HCT116 (cell line): ENCODE measurements at regions of chr20 and their contacts with region 1.

Region 1: DNA sequence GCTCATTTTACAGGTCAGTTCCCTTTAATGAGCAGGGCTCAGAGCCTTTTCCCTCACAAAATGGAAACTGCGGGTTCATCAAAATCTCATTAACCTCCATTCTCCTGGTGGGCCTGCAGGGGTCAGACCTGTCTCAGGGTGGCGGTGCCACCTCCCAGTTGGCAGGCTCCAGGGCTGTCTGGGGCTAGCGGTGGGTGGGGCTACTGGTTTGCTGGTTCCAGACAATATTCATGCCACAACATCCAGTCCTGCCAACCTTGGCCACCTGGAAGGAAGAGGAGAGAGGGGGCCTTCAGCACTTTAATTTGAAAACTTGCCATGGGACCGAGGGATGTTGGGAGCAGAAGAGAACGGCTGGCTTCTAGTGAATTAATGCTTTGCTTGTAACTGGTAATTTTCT is 41.9 kb upstream of the CTNNBL1 start:
- DNase-seq: peak; percentile 36
- ATAC-seq: peak; percentile 99
- H3K4me3 ChIP-seq: no peak overlapping the region
- H3K27ac ChIP-seq: no peak overlapping the region
- H3K4me1 ChIP-seq: no peaks in the 10 kb centered on the region
- H3K27me3 ChIP-seq: peaks cover 6% of the 10 kb centered on the region; the same call in 1 of the 2 replicates
- CTCF ChIP-seq: peak; percentile 62 to 72 (median 65)
- POLR2A ChIP-seq: no peak
- RAD21 ChIP-seq: peak; percentile 82

Region 2: GRCh38 chr20:37896932-37897548 is 245.1 kb after region 1 on chr20:
- CTCF ChIA-PET with region 1: no interaction called
- POLR2A ChIA-PET with region 1: no interaction called
- RAD21 ChIA-PET with region 1: no interaction called
- intact Hi-C with region 1: loop called (anchors 10 kb)
- DNase-seq: no peak
- ATAC-seq: peak; percentile 35; the same call in 1 of the 2 replicates
- H3K4me3 ChIP-seq: no peak overlapping the region
- H3K27ac ChIP-seq: no peak overlapping the region
- H3K4me1 ChIP-seq: no peaks in the 10 kb centered on the region
- H3K27me3 ChIP-seq: peaks cover 11% of the 10 kb centered on the region; the same call in 1 of the 2 replicates
- CTCF ChIP-seq: peak in 2 of 3 experiments; percentile 31; a peak in 3 of 6 replicates
- POLR2A ChIP-seq: no peak
- RAD21 ChIP-seq: no peak

Region 3: GRCh38 chr20:37992802-37993409 is 341.0 kb after region 1 on chr20:
- CTCF ChIA-PET with region 1: no interaction called
- POLR2A ChIA-PET with region 1: no interaction called
- RAD21 ChIA-PET with region 1: no interaction called
- intact Hi-C with region 1: loop called (anchors 1 kb)
- DNase-seq: no peak
- ATAC-seq: peak; percentile 46; the same call in 1 of the 2 replicates
- H3K4me3 ChIP-seq: no peak overlapping the region
- H3K27ac ChIP-seq: no peak overlapping the region
- H3K4me1 ChIP-seq: 0 out of 4 replicates have a peak, but pooled peaks cover 0 to 3% of the 10 kb centered on the region in 2 experiments
- H3K27me3 ChIP-seq: no peaks in the 10 kb centered on the region
- CTCF ChIP-seq: peak; percentile 25 to 63 (median 46); a peak in 4 of 6 replicates
- POLR2A ChIP-seq: no peak
- RAD21 ChIP-seq: peak; percentile 37